Activated CD4-positive, alpha-beta T cell treated with anti-CD3 and anti-CD28 coated beads for 36 hours (primary cell): ENCODE measurements at regions of chr7 and their contacts with region 1.

Region 1: GRCh38 chr7:136030862-136031318 is 53.7 kb upstream of the MTPN start:
- DNase-seq: peak; percentile 37
- ATAC-seq: peak; percentile 83
- H3K4me3 Mint-ChIP-seq: peak overlapping the region; percentile 3
- H3K27ac Mint-ChIP-seq: peak overlapping the region; percentile 86
- H3K4me1 Mint-ChIP-seq: peaks cover 64% of the 10 kb centered on the region
- H3K27me3 Mint-ChIP-seq: peaks cover 13% of the 10 kb centered on the region

Region 2: DNA sequence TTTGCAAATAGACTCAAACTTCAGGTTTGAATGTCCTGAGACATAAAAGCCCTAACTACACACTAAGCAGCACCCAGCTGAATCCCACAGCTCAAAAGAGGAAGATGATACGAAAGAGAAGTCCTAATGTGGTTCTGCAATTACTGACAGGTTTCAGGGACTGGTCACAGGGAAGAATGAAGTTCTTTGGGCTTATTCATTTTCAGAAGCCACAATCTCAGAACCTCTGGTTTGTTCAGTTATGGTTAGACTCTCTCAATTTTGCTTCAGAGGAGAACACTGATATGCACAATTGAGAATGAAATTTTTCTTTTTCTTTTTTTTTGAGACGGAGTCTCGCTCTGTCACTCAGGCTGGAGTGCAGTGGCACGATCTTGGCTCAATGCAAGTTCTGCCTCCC is 187.7 kb before region 1 on chr7:
- CTCF ChIA-PET with region 1: interaction called, 3 read pairs
- POLR2A ChIA-PET with region 1: no interaction called
- intact Hi-C with region 1: loop called in 1 of 2 experiments (anchors 1 kb)
- DNase-seq: no peak
- ATAC-seq: peak; percentile 85
- H3K4me3 Mint-ChIP-seq: no peak overlapping the region
- H3K27ac Mint-ChIP-seq: no peak overlapping the region
- H3K4me1 Mint-ChIP-seq: peaks cover 10% of the 10 kb centered on the region
- H3K27me3 Mint-ChIP-seq: no peaks in the 10 kb centered on the region

Region 3: GRCh38 chr7:136009488-136010079 is 21.3 kb before region 1 on chr7:
- CTCF ChIA-PET with region 1: interaction called, 3 read pairs
- POLR2A ChIA-PET with region 1: no interaction called
- intact Hi-C with region 1: loop called in 1 of 2 experiments (anchors 1 kb)
- DNase-seq: no peak
- ATAC-seq: no peak
- H3K4me3 Mint-ChIP-seq: no peak overlapping the region
- H3K27ac Mint-ChIP-seq: no peak overlapping the region
- H3K4me1 Mint-ChIP-seq: peaks cover 4% of the 10 kb centered on the region
- H3K27me3 Mint-ChIP-seq: peaks cover 8% of the 10 kb centered on the region

Region 4: DNA sequence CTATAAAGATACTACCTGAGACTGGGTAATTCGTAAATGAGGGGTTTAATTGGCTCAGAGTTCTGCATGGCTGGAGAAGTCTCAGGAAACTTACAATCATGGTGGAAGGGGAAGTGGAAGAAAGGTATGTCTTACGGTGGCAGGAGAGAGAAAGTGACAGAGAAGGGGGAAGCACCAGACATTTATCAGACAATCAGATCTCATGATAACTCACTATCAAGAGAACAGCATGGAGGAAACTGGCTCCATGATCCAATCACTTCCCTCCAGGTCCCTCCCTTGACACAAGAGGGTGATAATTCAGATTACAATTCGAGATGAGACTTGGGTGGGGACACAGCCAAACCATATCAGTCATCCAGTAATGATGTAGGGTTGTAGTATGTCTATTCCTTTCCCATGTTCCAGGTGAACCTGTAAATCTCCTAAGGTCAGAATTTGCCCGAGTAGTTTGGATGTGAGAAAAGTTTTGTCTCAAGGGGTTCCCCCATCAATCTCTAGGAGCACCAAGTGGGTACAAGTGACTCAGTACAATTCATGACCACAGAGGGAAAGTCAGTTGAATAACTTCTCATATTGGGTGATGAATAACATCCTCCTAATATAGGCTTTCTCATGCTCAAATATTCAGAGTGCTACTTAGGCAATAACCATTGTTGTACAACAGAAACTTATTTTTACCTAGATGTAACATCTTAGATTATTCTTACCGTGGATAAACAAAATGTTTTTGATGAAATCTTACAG is 14.1 kb before region 1 on chr7:
- CTCF ChIA-PET with region 1: interaction called, 8 read pairs
- POLR2A ChIA-PET with region 1: interaction called, 4 read pairs
- intact Hi-C with region 1: loop called (anchors 1 kb)
- DNase-seq: peak; percentile 15
- ATAC-seq: peak; percentile 92
- H3K4me3 Mint-ChIP-seq: no peak overlapping the region
- H3K27ac Mint-ChIP-seq: peak overlapping the region; percentile 21
- H3K4me1 Mint-ChIP-seq: peaks cover 21% of the 10 kb centered on the region
- H3K27me3 Mint-ChIP-seq: peaks cover 20% of the 10 kb centered on the region

Region 5: GRCh38 chr7:136509466-136509865 is 478.6 kb after region 1 on chr7:
- CTCF ChIA-PET with region 1: no interaction called
- POLR2A ChIA-PET with region 1: no interaction called
- intact Hi-C with region 1: no loop called
- DNase-seq: no peak
- ATAC-seq: no peak
- H3K4me3 Mint-ChIP-seq: no peak overlapping the region
- H3K27ac Mint-ChIP-seq: no peak overlapping the region
- H3K4me1 Mint-ChIP-seq: no peaks in the 10 kb centered on the region
- H3K27me3 Mint-ChIP-seq: no peaks in the 10 kb centered on the region